Right ventricle myocardium inferior (tissue), 1 donor: ENCODE measurements at regions of chr16 and their contacts with region 1.

Region 1: GRCh38 chr16:85610508-85611332 is 2.4 kb upstream of the GSE1 start:
- DNase-seq: peak; percentile 93
- ATAC-seq: peak; percentile 35

Region 2: GRCh38 chr16:85305996-85306792 is 304.5 kb before region 1 on chr16:
- intact Hi-C with region 1: loop called (anchors 5 kb)
- DNase-seq: peak; percentile 92
- ATAC-seq: peak; percentile 51

Region 3: DNA sequence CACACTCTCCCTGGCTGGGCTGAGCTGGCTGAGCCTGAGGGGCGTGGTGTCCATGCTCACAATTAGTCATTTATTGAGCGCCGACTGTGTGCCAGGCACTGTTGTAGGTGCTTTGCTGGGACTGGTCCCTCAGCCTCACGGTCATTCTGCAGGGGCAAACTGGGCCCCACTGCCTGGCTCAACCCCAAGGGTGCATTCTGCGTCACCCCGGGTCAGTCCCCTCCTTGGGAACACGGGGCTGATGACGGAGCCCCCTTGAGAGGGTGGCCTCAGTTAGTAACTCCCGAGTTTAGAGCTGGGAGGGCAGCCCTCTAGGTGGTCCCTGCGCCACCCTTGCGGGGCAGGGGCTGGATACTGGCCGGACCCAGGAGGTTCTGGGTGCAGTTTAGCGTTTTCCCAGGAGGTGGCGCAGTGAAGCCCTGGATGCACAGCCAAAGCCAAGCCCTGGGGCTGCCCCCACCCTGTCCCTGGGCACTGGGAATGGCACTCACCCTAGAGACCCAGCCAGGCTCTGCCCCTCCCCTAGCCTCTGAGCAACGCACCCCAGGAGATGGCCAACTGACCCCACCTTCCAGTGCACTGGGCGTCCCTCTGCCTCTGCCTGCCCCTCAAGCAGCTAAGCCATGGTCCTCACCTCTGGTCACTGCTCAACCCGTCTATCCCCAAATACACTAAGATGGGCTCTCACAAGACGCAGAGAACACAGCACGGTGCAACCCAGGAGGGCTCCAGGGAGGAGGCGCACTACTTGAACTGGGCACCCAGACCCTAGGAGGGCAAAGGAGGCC is 240.8 kb before region 1 on chr16:
- intact Hi-C with region 1: loop called (anchors 2 kb)
- DNase-seq: no peak
- ATAC-seq: peak; percentile 43

Region 4: GRCh38 chr16:85393674-85394483 is 216.8 kb before region 1 on chr16:
- intact Hi-C with region 1: loop called (anchors 10 kb)
- DNase-seq: peak; percentile 75
- ATAC-seq: peak; percentile 53

Region 5: DNA sequence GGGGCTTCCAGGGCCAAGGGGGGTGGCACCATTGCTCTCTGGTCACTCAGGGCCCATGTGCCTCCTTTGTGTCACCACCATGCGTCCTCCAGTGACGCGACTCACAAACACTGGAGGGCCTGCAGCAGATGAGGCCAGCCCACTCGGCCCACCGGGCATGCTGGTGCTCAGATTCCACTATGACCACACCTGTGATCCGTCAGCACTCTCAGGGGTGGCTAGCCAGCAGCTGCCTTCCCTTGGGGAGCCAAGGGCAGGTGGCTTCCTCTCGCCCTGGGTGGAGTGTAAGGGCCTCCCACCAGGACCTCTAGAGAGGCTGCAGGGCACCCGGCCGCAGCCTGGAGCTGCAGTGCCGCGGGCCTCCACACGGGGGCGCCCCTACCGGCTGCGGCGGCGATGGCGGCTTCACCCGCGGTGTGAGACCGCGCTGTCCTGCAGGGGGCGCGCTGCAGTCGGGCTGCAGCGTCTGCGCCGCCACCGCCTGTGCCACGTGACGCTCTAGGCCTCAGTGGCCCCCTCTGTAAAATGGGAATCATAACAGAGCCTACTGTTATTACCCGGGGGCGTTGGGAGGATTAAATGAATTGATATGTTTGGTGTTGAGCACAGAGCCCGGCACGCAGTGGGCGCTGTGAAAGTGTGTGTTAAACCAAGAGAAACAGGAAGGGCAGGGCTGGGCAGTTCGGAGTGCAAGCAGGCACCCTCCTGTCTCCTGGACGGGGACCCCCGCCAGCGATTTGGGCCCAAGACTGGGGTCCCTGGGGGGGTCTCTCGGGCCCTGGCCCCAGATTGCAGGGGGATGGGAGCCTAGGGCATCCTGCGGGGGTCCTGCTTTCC is 190.0 kb before region 1 on chr16:
- intact Hi-C with region 1: loop called (anchors 2 kb)
- DNase-seq: peak; percentile 85
- ATAC-seq: peak; percentile 67

Region 6: GRCh38 chr16:85448557-85449197 is 162.0 kb before region 1 on chr16:
- intact Hi-C with region 1: no loop called
- DNase-seq: no peak
- ATAC-seq: no peak

Region 7: DNA sequence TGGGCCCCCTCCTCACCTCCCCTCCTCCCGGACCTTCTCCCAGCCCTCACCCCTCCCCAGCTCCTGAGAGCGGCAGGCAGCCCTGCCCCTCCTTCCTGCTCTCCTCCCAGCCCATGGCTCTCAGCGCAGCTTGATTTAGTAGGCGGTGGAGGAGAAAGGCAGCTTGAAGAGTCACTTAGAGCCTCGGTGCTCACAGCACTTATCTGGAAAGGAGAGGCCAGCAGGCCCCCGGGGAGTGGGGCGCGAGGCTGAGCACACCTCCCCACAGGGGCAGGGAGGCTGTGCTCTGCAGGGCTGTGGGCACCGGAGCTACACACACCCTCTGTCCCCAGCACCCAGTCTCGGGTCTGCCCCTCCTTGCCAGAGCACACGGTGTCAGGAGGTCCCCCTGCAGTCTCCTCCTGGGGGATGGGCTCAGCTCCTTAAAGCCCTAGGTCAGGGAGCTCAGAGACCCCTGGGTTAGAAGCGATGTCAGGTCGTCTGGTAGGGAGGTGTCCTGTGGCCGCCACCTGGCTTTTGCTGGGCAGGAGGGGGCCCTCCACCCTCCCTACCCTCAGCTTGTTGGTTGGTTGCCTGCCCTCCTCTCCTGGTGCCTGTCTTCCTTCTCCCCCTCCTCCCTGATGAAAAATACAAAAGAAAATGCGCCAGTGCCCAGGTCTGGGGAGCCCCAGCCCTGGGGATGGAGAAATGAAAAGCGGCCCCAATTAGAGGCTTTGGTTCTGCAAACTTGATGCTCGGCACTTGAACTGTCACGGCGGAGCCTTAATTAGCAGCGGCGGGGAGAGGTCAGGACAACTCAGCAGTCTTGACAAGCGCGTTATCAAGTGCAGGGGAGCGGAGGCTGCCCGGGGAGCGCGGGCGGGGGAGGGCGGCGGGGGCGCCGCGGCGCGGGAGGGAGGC is 148.7 kb before region 1 on chr16:
- intact Hi-C with region 1: loop called (anchors 5 kb)
- DNase-seq: no peak
- ATAC-seq: peak; percentile 49

Region 8: GRCh38 chr16:85554112-85554813 is 56.5 kb before region 1 on chr16:
- intact Hi-C with region 1: loop called (anchors 2 kb)
- DNase-seq: peak; percentile 80
- ATAC-seq: peak; percentile 66